ENCODE measurements at regions of chr1 and their contacts with region 1.

Region 1: DNA sequence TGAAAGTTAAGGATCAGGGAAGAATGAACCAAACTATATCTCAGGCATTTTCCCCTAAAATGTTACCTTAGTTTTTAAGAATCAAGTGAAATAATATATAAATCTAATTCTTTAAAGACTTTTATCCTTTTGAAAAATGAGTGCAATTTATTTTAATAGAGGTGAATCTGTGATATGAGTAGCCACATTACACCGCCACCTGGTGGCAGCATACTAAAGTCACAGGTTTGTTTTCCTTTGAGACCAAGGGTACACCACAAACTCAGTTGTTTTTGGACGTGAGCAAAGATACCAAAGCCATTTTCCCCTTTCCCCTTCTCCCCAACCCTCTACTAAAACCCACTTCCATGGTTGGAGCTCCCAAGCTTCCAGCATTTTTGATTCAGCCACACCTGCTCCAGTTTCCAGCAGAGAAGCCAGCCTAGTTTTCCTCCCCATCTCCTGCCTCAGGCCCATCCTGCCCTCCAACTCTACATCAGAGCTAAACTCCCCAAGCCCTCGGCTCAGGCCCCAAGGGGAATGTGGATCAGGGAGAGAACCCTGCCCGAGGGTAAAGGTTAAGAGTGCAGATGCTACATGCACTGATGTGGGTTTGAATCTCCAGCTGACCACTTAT is 22.9 kb upstream of the LDLRAP1 start:
- DNase-seq: peak; percentile 61 to 66 (median 62)
- H3K4me3 ChIP-seq: no peak overlapping the region
- H3K4me3 Mint-ChIP-seq: no peak overlapping the region
- H3K27ac ChIP-seq: no peak overlapping the region
- H3K27ac Mint-ChIP-seq: peak overlapping the region in 5 of 7 donors; percentile 68 to 84 (median 78)
- H3K4me1 ChIP-seq: peaks cover 5% of the 10 kb centered on the region
- H3K4me1 Mint-ChIP-seq: peaks cover 6 to 10% (median 8%) of the 10 kb centered on the region in 4 donors
- H3K27me3 ChIP-seq: no peaks in the 10 kb centered on the region
- H3K27me3 Mint-ChIP-seq: peaks cover 0 to 2% of the 10 kb centered on the region in 2 donors

Region 2: GRCh38 chr1:25566730-25567341 is 46.3 kb after region 1 on chr1:
- CTCF ChIA-PET with region 1: interaction called, 17 read pairs
- POLR2A ChIA-PET with region 1: interaction called, 4 read pairs
- intact Hi-C with region 1: loop called (anchors 1 kb)
- DNase-seq: peak in 1 of 5 donors; percentile 46
- H3K4me3 ChIP-seq: no peak overlapping the region
- H3K4me3 Mint-ChIP-seq: peak overlapping the region in 5 of 8 donors; percentile 13 to 88 (median 68)
- H3K27ac ChIP-seq: no peak overlapping the region
- H3K27ac Mint-ChIP-seq: peak overlapping the region in 6 of 7 donors; percentile 32 to 95 (median 73)
- H3K4me1 ChIP-seq: peaks cover 76% of the 10 kb centered on the region
- H3K4me1 Mint-ChIP-seq: peaks cover 35 to 93% (median 60%) of the 10 kb centered on the region in 4 donors
- H3K27me3 ChIP-seq: no peaks in the 10 kb centered on the region
- H3K27me3 Mint-ChIP-seq: no peaks in the 10 kb centered on the region

Region 3: DNA sequence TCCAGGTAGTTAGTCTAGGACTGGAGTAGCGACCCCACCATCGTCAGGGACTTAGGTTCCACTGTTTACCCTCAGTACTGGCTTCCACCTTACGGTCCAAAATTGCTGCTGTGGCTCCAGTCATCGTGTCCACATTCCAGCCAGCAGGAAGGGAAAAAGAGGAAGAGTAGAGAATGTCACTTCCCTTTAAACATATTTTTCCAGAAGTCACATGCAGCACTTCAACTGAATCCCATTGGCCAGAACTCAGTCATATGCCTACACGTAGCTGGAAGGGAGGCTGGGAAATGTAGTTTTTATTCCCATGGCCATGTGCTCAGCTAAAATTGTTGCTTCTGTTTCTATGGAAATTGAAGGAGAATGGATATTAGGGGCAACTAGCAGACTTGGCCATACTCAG is 195.3 kb after region 1 on chr1:
- CTCF ChIA-PET with region 1: no interaction called
- POLR2A ChIA-PET with region 1: no interaction called
- intact Hi-C with region 1: no loop called
- DNase-seq: no peak
- H3K4me3 ChIP-seq: no peak overlapping the region
- H3K4me3 Mint-ChIP-seq: no peak overlapping the region
- H3K27ac ChIP-seq: no peak overlapping the region
- H3K27ac Mint-ChIP-seq: peak overlapping the region in 1 of 7 donors; percentile 53
- H3K4me1 ChIP-seq: peaks cover 14% of the 10 kb centered on the region
- H3K4me1 Mint-ChIP-seq: peaks cover 26 to 57% (median 39%) of the 10 kb centered on the region in 4 donors
- H3K27me3 ChIP-seq: no peaks in the 10 kb centered on the region
- H3K27me3 Mint-ChIP-seq: no peaks in the 10 kb centered on the region

Region 4: GRCh38 chr1:25810341-25811299 is 290.1 kb after region 1 on chr1:
- CTCF ChIA-PET with region 1: interaction called, 21 read pairs
- POLR2A ChIA-PET with region 1: interaction called, 3 read pairs
- intact Hi-C with region 1: loop called (anchors 1 kb)
- DNase-seq: peak; percentile 66 to 79 (median 69)
- H3K4me3 ChIP-seq: no peak overlapping the region
- H3K4me3 Mint-ChIP-seq: no peak overlapping the region
- H3K27ac ChIP-seq: no peak overlapping the region
- H3K27ac Mint-ChIP-seq: peak overlapping the region in 3 of 7 donors; percentile 35 to 84 (median 64)
- H3K4me1 ChIP-seq: peaks cover 5% of the 10 kb centered on the region
- H3K4me1 Mint-ChIP-seq: peaks cover 0 to 10% (median 2%) of the 10 kb centered on the region in 4 donors
- H3K27me3 ChIP-seq: no peaks in the 10 kb centered on the region
- H3K27me3 Mint-ChIP-seq: no peaks in the 10 kb centered on the region

Measured in CD4-positive, alpha-beta memory T cell (primary cell).